Psoas muscle (tissue), 8 donors: ENCODE measurements at regions of chr11 and their contacts with region 1.

Region 1: DNA sequence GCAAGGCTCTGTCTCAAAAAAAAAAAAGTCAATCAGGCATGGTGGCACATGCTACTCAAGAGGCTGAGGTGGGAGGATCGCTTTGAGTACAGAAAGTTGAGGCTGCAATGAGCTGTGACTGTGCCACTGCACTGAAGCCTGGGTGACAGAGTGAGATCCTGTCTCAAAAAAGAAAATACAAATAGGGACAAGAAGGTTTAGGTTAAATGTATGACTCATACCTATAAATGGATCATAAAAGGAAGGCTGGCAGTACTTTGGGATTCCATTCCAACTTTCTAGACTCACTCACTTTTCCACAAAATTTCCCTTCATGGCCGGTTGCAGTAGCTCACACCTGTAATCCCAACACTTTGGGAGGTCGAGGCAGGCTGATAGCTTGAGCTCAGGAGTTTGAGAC is 25.6 kb upstream of the OSBP start:
- DNase-seq: no peak
- ATAC-seq: peak in 3 of 4 donors; percentile 19 to 76 (median 41)
- H3K4me3 ChIP-seq: no peak overlapping the region
- H3K27ac ChIP-seq: no peak overlapping the region
- H3K4me1 ChIP-seq: no peaks in the 10 kb centered on the region
- H3K27me3 ChIP-seq: no peaks in the 10 kb centered on the region
- CTCF ChIP-seq: no peak

Region 2: GRCh38 chr11:59401262-59401552 is 239.9 kb before region 1 on chr11:
- intact Hi-C with region 1: no loop called
- DNase-seq: no peak
- ATAC-seq: no peak
- H3K4me3 ChIP-seq: no peak overlapping the region
- H3K27ac ChIP-seq: no peak overlapping the region
- H3K4me1 ChIP-seq: no peaks in the 10 kb centered on the region
- H3K27me3 ChIP-seq: no peaks in the 10 kb centered on the region
- CTCF ChIP-seq: no peak

Region 3: DNA sequence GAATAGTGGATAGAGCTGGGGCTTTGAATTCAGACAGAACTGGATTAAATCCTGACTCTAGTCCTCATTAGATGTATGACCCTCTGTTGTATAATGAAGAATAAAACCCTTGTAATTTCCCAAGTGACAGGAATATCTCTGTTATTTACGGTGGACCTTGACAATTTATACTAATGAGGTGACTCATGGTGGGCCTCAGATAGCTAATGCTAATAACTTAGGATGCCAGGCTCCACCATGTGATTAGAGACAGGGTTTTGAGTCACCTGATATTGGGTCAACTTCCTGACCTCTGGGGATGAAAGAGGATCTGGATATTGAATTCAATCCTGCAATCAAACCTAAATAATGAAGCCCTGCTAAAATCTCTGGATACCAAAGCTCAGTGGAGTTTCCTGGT is 59.1 kb before region 1 on chr11:
- intact Hi-C with region 1: loop called in 1 of 2 experiments (anchors 5 kb)
- DNase-seq: no peak
- ATAC-seq: no peak
- H3K4me3 ChIP-seq: no peak overlapping the region
- H3K27ac ChIP-seq: no peak overlapping the region
- H3K4me1 ChIP-seq: no peaks in the 10 kb centered on the region
- H3K27me3 ChIP-seq: no peaks in the 10 kb centered on the region
- CTCF ChIP-seq: no peak

Region 4: DNA sequence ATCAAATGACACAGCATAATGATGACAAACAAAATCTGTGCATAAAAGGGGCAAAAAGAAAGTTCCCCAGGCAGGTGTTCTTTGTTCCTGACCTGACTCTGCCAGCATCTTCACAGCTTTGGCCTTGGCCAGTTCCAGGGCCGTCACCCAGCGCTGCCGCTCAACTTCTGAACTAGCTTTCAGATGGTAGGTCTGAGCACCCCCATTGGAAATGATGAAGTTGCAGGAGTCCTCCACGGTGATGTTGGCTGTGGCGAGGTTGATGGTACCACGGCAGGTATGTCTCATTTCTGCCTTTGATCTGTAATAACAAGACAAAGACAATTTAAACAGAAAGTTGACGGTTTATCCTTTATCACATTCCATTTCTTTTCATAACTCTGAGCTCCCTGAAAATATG is 30.9 kb before region 1 on chr11:
- intact Hi-C with region 1: loop called in 1 of 2 experiments (anchors 1 kb)
- DNase-seq: no peak
- ATAC-seq: no peak
- H3K4me3 ChIP-seq: peak overlapping the region; percentile 92
- H3K27ac ChIP-seq: peak overlapping the region; percentile 98
- H3K4me1 ChIP-seq: peaks cover 88% of the 10 kb centered on the region
- H3K27me3 ChIP-seq: no peaks in the 10 kb centered on the region
- CTCF ChIP-seq: no peak

Region 5: GRCh38 chr11:59660621-59661020 is 19.5 kb after region 1 on chr11:
- intact Hi-C with region 1: no loop called
- DNase-seq: no peak
- ATAC-seq: no peak
- H3K4me3 ChIP-seq: no peak overlapping the region
- H3K27ac ChIP-seq: no peak overlapping the region
- H3K4me1 ChIP-seq: peaks cover 23% of the 10 kb centered on the region
- H3K27me3 ChIP-seq: no peaks in the 10 kb centered on the region
- CTCF ChIP-seq: no peak

Region 6: GRCh38 chr11:59698506-59698905 is 57.4 kb after region 1 on chr11:
- intact Hi-C with region 1: no loop called
- DNase-seq: no peak
- ATAC-seq: no peak
- H3K4me3 ChIP-seq: no peak overlapping the region
- H3K27ac ChIP-seq: no peak overlapping the region
- H3K4me1 ChIP-seq: no peaks in the 10 kb centered on the region
- H3K27me3 ChIP-seq: no peaks in the 10 kb centered on the region
- CTCF ChIP-seq: no peak

Region 7: DNA sequence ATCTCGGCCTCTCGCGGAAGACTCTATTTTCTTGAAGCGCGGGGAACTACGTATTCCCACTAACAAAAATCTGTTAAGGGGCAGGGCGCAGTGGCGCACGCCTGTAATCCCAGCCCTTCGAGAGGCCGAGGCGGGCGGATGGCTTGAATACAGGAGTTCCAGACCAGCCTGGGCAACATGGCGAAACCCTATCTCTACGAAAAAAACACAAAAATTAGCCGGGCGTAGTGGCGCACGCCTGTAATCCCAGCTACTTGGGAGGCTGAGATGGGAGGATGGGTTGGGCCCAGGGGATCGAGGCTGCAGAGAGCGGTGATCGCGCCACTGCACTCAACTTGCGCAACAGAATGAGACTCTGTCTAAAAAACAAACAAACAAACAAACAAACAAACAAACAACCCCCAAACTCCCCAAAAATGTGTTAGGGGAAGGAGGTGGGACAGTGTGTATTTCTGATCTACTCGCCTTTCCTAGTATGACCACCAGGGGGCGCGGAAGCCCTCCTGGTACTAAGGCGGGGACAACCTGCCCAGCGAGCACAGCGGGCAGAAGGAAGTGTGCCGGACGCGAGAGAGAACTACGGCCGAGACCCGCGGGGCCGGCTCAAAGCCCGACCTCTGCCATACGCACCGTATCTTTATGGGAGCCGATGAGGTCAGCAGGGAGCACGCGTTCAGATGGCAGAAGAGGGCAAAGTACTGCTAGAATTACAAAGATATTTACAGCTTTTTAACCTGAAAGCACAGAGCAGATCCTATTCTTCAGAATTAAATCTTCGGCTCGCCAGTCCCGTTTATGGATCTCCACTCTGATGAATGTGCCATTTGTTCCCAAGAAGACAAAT is 112.7 kb after region 1 on chr11:
- intact Hi-C with region 1: no loop called
- DNase-seq: peak; percentile 85 to 91
- ATAC-seq: peak; percentile 69 to 79 (median 74)
- H3K4me3 ChIP-seq: peak overlapping the region; percentile 89
- H3K27ac ChIP-seq: peak overlapping the region; percentile 92
- H3K4me1 ChIP-seq: peaks cover 15% of the 10 kb centered on the region
- H3K27me3 ChIP-seq: no peaks in the 10 kb centered on the region
- CTCF ChIP-seq: peak; percentile 96